ENCODE measurements at regions of chr2 and their contacts with region 1.

Region 1: GRCh38 chr2:88329815-88330603 is 122.5 kb downstream of the FOXI3 start:
- DNase-seq: peak; percentile 3
- ATAC-seq: no peak
- H3K4me3 ChIP-seq: no peak overlapping the region
- H3K27ac ChIP-seq: no peak overlapping the region
- H3K4me1 ChIP-seq: no peaks in the 10 kb centered on the region
- H3K27me3 ChIP-seq: no peaks in the 10 kb centered on the region
- CTCF ChIP-seq: no peak
- POLR2A ChIP-seq: no peak
- RAD21 ChIP-seq: no peak

Region 2: GRCh38 chr2:88239781-88240180 is 90.2 kb before region 1 on chr2:
- CTCF ChIA-PET with region 1: no interaction called
- POLR2A ChIA-PET with region 1: no interaction called
- dilution Hi-C with region 1: no loop called
- in situ Hi-C with region 1: no loop called
- intact Hi-C with region 1: no loop called
- DNase-seq: no peak
- ATAC-seq: no peak
- H3K4me3 ChIP-seq: no peak overlapping the region
- H3K27ac ChIP-seq: no peak overlapping the region
- H3K4me1 ChIP-seq: no peaks in the 10 kb centered on the region
- H3K27me3 ChIP-seq: no peaks in the 10 kb centered on the region
- CTCF ChIP-seq: no peak
- POLR2A ChIP-seq: no peak
- RAD21 ChIP-seq: no peak

Region 3: DNA sequence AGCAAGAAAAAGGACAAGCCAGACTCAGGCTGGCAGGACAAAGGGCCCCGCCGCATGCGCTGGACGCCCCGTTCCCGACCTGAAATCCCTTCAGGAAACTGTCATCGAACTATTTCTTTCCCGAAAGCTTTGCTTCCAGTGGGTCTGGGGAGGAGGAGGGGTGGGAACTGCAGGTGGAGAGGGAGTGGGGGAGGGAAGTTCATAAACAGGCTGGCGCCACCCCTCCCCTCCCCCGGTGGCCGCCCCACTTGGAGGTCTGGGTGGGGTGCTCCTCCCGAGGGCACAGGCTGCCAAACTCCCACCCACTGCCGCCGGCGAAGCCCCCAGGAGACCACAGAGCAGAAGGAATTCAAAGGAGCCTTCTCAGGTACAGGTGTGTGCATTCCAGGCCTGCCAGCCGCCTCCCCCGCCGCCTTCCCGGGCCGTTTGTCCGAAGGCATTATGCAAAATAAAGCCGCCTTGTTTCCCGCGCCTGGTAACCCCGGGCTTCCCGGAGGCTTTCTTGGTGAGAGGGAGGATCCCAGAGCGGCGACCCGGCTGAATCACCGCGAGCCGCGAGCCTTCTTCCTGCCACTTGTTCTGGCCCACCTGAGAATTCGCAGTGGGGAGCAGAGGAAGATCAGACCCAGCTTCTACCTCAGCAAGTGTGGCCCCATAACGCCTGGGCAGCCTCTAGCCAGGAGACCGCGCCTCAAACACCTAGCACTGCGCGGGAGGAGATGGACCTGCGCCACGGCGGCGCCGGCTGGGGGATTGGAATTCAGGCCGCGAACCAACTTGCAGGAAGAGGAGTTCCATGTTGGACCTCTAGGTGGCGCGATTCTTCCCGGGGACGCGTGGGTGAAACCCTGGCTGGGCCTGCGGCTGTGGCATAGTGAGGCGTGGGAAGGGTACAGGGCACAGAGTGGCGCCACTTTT is 20.6 kb after region 1 on chr2:
- CTCF ChIA-PET with region 1: no interaction called
- POLR2A ChIA-PET with region 1: no interaction called
- dilution Hi-C with region 1: no loop called
- in situ Hi-C with region 1: no loop called
- intact Hi-C with region 1: no loop called
- DNase-seq: peak; percentile 12
- ATAC-seq: peak; percentile 37
- H3K4me3 ChIP-seq: no peak overlapping the region
- H3K27ac ChIP-seq: no peak overlapping the region
- H3K4me1 ChIP-seq: no peaks in the 10 kb centered on the region
- H3K27me3 ChIP-seq: no peaks in the 10 kb centered on the region
- CTCF ChIP-seq: peak; percentile 42
- POLR2A ChIP-seq: no peak
- RAD21 ChIP-seq: no peak

Region 4: GRCh38 chr2:88835726-88836125 is 505.7 kb after region 1 on chr2:
- CTCF ChIA-PET with region 1: no interaction called
- POLR2A ChIA-PET with region 1: interaction called, 13 read pairs
- dilution Hi-C with region 1: no loop called
- in situ Hi-C with region 1: no loop called
- intact Hi-C with region 1: no loop called
- DNase-seq: no peak
- ATAC-seq: no peak
- H3K4me3 ChIP-seq: no peak overlapping the region
- H3K27ac ChIP-seq: no peak overlapping the region
- H3K4me1 ChIP-seq: no peaks in the 10 kb centered on the region
- H3K27me3 ChIP-seq: no peaks in the 10 kb centered on the region
- CTCF ChIP-seq: no peak
- POLR2A ChIP-seq: no peak
- RAD21 ChIP-seq: no peak

Measured in IMR-90 (cell line).